ENCODE measurements at regions of chr2 and their contacts with region 1.

Region 1: GRCh38 chr2:218781691-218782527 is at the start of gene CYP27A1:
- DNase-seq: peak; percentile 42 to 91 (median 76)

Region 2: GRCh38 chr2:218381916-218382366 is 400.0 kb before region 1 on chr2 and contains the start of gene SLC11A1:
- intact Hi-C with region 1: no loop called
- DNase-seq: peak in 25 of 42 donors; percentile 32 to 82 (median 53)

Region 3: GRCh38 chr2:218745559-218746469 is 36.1 kb before region 1 on chr2:
- intact Hi-C with region 1: loop called (anchors 5 kb)
- DNase-seq: peak; percentile 78 to 97 (median 93)

Region 4: DNA sequence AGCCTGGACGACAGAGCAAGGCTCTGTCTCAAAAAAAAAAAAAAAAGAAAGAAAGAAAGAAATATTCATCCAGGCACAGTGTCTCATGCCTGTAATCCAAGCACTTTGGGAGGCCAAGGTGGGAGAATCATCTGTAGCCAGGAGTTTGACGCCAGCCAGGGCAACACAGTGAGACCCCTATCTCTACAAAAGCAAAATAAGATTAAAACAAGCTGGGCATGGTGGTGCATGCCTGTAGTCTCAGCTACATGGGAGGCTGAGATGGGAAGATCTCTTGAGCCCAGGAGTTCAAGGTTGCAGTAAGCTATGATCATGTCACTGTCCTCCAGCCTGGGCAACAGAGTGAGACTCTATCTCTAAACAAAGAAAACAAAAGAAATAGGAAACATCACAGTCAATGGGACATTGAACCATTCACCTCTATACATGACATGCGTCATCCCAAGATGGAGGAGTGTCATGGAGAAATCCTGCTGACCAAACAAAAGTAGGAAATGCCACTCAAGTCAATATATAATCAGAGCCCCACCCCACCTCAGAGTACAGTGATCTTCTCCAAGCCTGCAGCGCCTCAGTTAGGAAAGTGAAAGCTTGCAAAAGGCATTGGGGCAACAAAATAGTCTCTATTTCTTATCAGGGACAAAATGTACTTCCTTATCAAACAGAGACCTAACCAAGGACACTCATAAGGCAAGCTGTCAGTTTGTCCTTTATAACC is 193.3 kb after region 1 on chr2:
- intact Hi-C with region 1: no loop called
- DNase-seq: no peak

Measured in head of caudate nucleus (tissue), 42 donors.